ENCODE measurements at regions of chr9 and their contacts with region 1.

Region 1: GRCh38 chr9:104993291-104993963 is 65.5 kb upstream of the ABCA1 start:
- DNase-seq: peak; percentile 52 to 54
- H3K4me3 ChIP-seq: no peak overlapping the region
- H3K27ac ChIP-seq: peak overlapping the region; percentile 93 to 96
- H3K4me1 ChIP-seq: peaks cover 0 to 14% of the 10 kb centered on the region in 2 donors
- H3K27me3 ChIP-seq: no peaks in the 10 kb centered on the region
- CTCF ChIP-seq: no peak
- POLR2A ChIP-seq: no peak

Region 2: DNA sequence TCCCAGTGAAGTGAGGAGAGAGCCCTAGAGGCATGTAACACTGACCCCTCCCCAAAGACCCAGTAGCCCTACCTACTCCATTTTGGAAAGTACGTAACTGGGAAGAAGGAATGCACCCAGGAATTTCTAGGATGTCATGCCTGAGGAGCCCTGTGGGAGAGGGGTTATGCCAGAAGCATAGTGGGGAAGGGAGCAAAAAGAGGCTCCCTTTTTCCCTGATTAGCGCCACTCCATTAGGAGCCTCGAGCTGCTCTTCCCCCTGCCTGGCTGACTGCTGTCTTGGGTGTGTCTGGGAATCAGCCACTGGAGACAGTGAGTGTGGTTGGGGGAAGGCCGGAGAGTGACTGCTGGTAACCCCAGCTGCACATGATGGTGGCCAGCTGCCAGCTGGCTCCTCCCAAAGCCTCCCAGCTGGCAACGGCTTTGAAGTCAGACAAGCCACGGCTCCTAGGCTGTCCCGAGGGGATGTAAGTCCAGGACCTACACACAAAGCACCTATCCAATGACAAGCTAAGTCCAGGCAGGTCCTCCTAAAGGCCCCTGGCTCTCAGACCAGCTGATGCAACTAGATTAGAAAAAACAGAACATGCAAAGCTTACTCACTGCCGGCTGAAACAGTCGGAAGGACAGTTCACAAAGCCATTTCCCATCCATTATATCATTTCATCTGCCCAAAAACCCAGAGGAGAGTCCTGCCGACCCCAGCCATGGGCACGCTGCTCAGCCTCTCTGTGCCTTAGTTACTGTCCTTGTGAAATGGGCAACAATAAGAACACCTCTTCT is 71.1 kb after region 1 on chr9:
- intact Hi-C with region 1: loop called (anchors 2 kb)
- DNase-seq: peak; percentile 81 to 86
- H3K4me3 ChIP-seq: peak overlapping the region in 2 of 3 donors; percentile 6 to 17
- H3K27ac ChIP-seq: peak overlapping the region; percentile 85 to 87
- H3K4me1 ChIP-seq: peaks cover 0 to 9% of the 10 kb centered on the region in 2 donors
- H3K27me3 ChIP-seq: no peaks in the 10 kb centered on the region
- CTCF ChIP-seq: peak in 1 of 3 donors; percentile 17
- POLR2A ChIP-seq: no peak